CD4-positive, alpha-beta memory T cell (primary cell): ENCODE measurements at regions of chr1 and their contacts with region 1.

Region 1: GRCh38 chr1:35202048-35202719 is 9.2 kb upstream of the SFPQ start:
- DNase-seq: peak; percentile 67 to 76 (median 72)
- H3K4me3 ChIP-seq: no peak overlapping the region
- H3K4me3 Mint-ChIP-seq: peak overlapping the region in 1 of 8 donors; percentile 39
- H3K27ac ChIP-seq: no peak overlapping the region
- H3K27ac Mint-ChIP-seq: peak overlapping the region in 2 of 7 donors; percentile 14 to 64
- H3K4me1 ChIP-seq: peaks cover 4% of the 10 kb centered on the region
- H3K4me1 Mint-ChIP-seq: peaks cover 5 to 9% (median 7%) of the 10 kb centered on the region in 4 donors
- H3K27me3 ChIP-seq: no peaks in the 10 kb centered on the region
- H3K27me3 Mint-ChIP-seq: peaks cover 0 to 3% of the 10 kb centered on the region in 2 donors

Region 2: DNA sequence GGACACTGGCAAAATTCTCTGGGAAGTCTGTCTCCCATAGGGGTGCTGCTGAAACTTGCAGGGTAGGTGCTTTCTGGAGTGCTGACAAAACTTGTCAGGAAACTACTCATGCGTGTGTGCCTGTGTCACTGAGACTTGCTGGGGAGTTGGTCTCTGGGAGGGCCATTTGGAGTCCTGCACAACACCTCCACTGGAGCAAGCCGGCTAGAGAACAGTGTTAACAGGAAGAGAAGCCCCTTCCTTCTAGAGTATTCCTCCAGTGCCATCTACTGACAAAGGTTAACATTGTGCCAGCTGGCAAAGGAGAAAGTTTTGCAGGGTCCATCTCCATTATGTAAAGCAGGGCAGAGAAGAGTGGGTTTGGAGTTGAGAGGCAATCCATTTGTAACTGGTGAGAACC is 96.3 kb after region 1 on chr1:
- CTCF ChIA-PET with region 1: interaction called, 54 read pairs
- POLR2A ChIA-PET with region 1: interaction called, 5 read pairs
- intact Hi-C with region 1: loop called (anchors 1 kb)
- DNase-seq: peak; percentile 42 to 51 (median 44)
- H3K4me3 ChIP-seq: no peak overlapping the region
- H3K4me3 Mint-ChIP-seq: no peak overlapping the region
- H3K27ac ChIP-seq: no peak overlapping the region
- H3K27ac Mint-ChIP-seq: peak overlapping the region in 3 of 7 donors; percentile 29 to 86 (median 30)
- H3K4me1 ChIP-seq: no peaks in the 10 kb centered on the region
- H3K4me1 Mint-ChIP-seq: peaks cover 0 to 12% (median 7%) of the 10 kb centered on the region in 4 donors
- H3K27me3 ChIP-seq: no peaks in the 10 kb centered on the region
- H3K27me3 Mint-ChIP-seq: no peaks in the 10 kb centered on the region

Region 3: DNA sequence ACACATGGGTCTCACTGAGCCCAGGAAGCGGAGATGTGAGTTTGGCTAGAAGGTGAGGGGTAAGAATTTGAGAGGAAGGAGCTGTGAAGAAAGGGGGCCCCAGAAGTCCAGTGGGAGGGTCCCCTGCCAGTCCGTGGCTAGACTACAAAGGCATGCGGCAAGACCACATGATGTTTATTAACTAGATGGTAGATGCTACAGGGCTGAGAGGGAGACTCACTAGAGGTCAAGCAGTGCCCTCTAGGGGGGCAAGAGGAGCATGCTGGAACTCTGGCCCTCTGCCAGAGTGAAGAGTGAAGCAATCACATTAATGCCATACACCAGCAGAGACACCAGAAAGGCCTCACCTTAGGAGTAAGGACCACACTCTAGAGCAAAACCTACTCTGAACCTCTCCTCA is 342.8 kb after region 1 on chr1:
- CTCF ChIA-PET with region 1: interaction called, 3 read pairs
- POLR2A ChIA-PET with region 1: no interaction called
- intact Hi-C with region 1: loop called (anchors 5 kb)
- DNase-seq: peak; percentile 65 to 68 (median 67)
- H3K4me3 ChIP-seq: no peak overlapping the region
- H3K4me3 Mint-ChIP-seq: peak overlapping the region in 1 of 8 donors; percentile 30
- H3K27ac ChIP-seq: no peak overlapping the region
- H3K27ac Mint-ChIP-seq: peak overlapping the region; percentile 22 to 89 (median 60)
- H3K4me1 ChIP-seq: peaks cover 37% of the 10 kb centered on the region
- H3K4me1 Mint-ChIP-seq: peaks cover 42 to 82% (median 67%) of the 10 kb centered on the region in 4 donors
- H3K27me3 ChIP-seq: no peaks in the 10 kb centered on the region
- H3K27me3 Mint-ChIP-seq: no peaks in the 10 kb centered on the region

Region 4: GRCh38 chr1:35777109-35777508 is 574.9 kb after region 1 on chr1:
- CTCF ChIA-PET with region 1: no interaction called
- POLR2A ChIA-PET with region 1: no interaction called
- intact Hi-C with region 1: loop called (anchors 2 kb)
- DNase-seq: peak in 2 of 5 donors; percentile 6 to 8
- H3K4me3 ChIP-seq: no peak overlapping the region
- H3K4me3 Mint-ChIP-seq: peak overlapping the region in 5 of 8 donors; percentile 2 to 26 (median 15)
- H3K27ac ChIP-seq: no peak overlapping the region
- H3K27ac Mint-ChIP-seq: peak overlapping the region; percentile 27 to 88 (median 81)
- H3K4me1 ChIP-seq: peaks cover 24% of the 10 kb centered on the region
- H3K4me1 Mint-ChIP-seq: peaks cover 11 to 32% (median 15%) of the 10 kb centered on the region in 4 donors
- H3K27me3 ChIP-seq: no peaks in the 10 kb centered on the region
- H3K27me3 Mint-ChIP-seq: no peaks in the 10 kb centered on the region